Naive thymus-derived CD4-positive, alpha-beta T cell (primary cell): ENCODE measurements at regions of chr4 and their contacts with region 1.

Region 1: GRCh38 chr4:1579901-1580691 is 104.0 kb downstream of the FAM53A start:
- DNase-seq: peak; percentile 85 to 97 (median 93)
- ATAC-seq: peak; percentile 90
- H3K4me3 ChIP-seq: peak overlapping the region; percentile 70
- H3K4me3 Mint-ChIP-seq: peak overlapping the region; percentile 73 to 87 (median 80)
- H3K27ac ChIP-seq: peak overlapping the region; percentile 73
- H3K27ac Mint-ChIP-seq: peak overlapping the region; percentile 18 to 79 (median 55)
- H3K4me1 ChIP-seq: peaks cover 0 to 5% of the 10 kb centered on the region in 2 donors
- H3K4me1 Mint-ChIP-seq: peaks cover 0 to 14% (median 10%) of the 10 kb centered on the region in 7 donors
- H3K27me3 ChIP-seq: no peaks in the 10 kb centered on the region
- H3K27me3 Mint-ChIP-seq: no peaks in the 10 kb centered on the region

Region 2: GRCh38 chr4:973431-974397 is 606.4 kb before region 1 on chr4 and contains the start of gene DGKQ:
- CTCF ChIA-PET with region 1: no interaction called
- POLR2A ChIA-PET with region 1: no interaction called
- intact Hi-C with region 1: loop called in 1 of 2 experiments (anchors 2 kb)
- DNase-seq: peak; percentile 68 to 93 (median 83)
- ATAC-seq: peak; percentile 96
- H3K4me3 ChIP-seq: peak within 1 kb of the TSS; percentile 56
- H3K4me3 Mint-ChIP-seq: peak within 1 kb of the TSS; percentile 19 to 75 (median 56)
- H3K27ac ChIP-seq: peak within 1 kb of the TSS; percentile 72
- H3K27ac Mint-ChIP-seq: no peak within 1 kb of the TSS
- H3K4me1 ChIP-seq: peaks cover 13 to 26% of the 10 kb centered on the region in 2 donors
- H3K4me1 Mint-ChIP-seq: peaks cover 0 to 17% (median 10%) of the 10 kb centered on the region in 7 donors
- H3K27me3 ChIP-seq: no peaks in the 10 kb centered on the region
- H3K27me3 Mint-ChIP-seq: no peaks in the 10 kb centered on the region
- total RNA-seq, gene DGKQ: 14.9 to 28.0 (median 22.7) TPM

Region 3: DNA sequence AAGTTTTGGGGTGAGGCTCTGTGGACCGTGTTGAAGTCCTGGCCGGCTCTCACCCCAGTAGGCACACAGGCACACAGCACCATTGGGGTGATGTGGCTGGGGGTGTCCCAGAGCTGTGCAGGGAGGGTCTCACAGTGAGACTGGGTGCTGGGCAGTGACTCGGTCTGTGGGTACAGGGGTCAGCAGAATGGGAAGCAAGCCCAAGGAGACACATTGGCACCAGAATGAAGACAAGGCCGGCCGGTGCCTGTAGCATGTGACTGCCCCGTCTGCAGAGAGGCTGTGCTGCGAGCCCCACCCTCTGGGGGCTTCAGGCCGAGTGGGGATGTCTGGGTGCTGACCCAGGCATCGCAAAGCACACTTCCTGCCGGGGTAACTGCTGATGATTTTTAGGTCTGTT is 285.2 kb before region 1 on chr4:
- CTCF ChIA-PET with region 1: no interaction called
- POLR2A ChIA-PET with region 1: no interaction called
- intact Hi-C with region 1: no loop called
- DNase-seq: no peak
- ATAC-seq: no peak
- H3K4me3 ChIP-seq: no peak overlapping the region
- H3K4me3 Mint-ChIP-seq: peak overlapping the region in 1 of 10 donors; percentile 53
- H3K27ac ChIP-seq: no peak overlapping the region
- H3K27ac Mint-ChIP-seq: no peak overlapping the region
- H3K4me1 ChIP-seq: peaks cover 18 to 37% of the 10 kb centered on the region in 2 donors
- H3K4me1 Mint-ChIP-seq: peaks cover 39 to 82% (median 69%) of the 10 kb centered on the region in 7 donors
- H3K27me3 ChIP-seq: no peaks in the 10 kb centered on the region
- H3K27me3 Mint-ChIP-seq: no peaks in the 10 kb centered on the region

Region 4: DNA sequence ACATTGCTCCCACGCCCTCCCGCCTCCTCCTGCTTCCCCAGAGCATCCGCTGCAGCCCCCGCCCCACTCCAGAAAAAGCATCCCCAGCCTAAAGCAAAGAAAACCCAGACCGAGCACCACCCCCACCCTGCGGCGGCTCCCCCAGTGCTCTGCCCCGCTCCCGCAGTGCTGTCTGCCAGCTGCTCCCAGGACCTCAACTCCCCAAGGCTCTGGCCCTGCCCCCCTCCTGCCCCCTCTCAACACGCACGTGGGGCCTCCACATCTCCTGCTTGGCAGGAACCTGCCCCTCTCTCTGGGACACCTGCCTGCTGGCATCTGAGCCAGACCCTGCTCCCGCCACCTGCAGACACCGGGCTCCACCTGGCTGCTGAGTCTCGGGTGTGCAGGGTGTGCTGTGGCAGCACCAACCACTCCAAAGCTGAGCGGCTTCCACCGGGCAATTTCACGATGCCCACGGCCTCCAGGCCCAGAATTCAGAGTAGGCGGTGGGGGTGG is 24.7 kb after region 1 on chr4:
- CTCF ChIA-PET with region 1: interaction called, 6 read pairs
- POLR2A ChIA-PET with region 1: interaction called, 22 read pairs
- intact Hi-C with region 1: loop called in 1 of 2 experiments (anchors 1 kb)
- DNase-seq: peak in 7 of 9 donors; percentile 55 to 81 (median 70)
- ATAC-seq: peak; percentile 80
- H3K4me3 ChIP-seq: peak overlapping the region; percentile 46
- H3K4me3 Mint-ChIP-seq: peak overlapping the region in 9 of 10 donors; percentile 55 to 84 (median 75)
- H3K27ac ChIP-seq: peak overlapping the region; percentile 45
- H3K27ac Mint-ChIP-seq: peak overlapping the region in 8 of 9 donors; percentile 77 to 97 (median 86)
- H3K4me1 ChIP-seq: peaks cover 10 to 29% of the 10 kb centered on the region in 2 donors
- H3K4me1 Mint-ChIP-seq: peaks cover 0 to 35% (median 13%) of the 10 kb centered on the region in 7 donors
- H3K27me3 ChIP-seq: no peaks in the 10 kb centered on the region
- H3K27me3 Mint-ChIP-seq: no peaks in the 10 kb centered on the region

Region 5: GRCh38 chr4:1721004-1721665 is 141.0 kb after region 1 on chr4 and contains the starts of genes TACC3 and TMEM129:
- CTCF ChIA-PET with region 1: no interaction called
- POLR2A ChIA-PET with region 1: interaction called, 3 read pairs
- intact Hi-C with region 1: loop called in 1 of 2 experiments (anchors 2 kb)
- DNase-seq: peak; percentile 79 to 97 (median 95)
- ATAC-seq: peak; percentile 92
- H3K4me3 ChIP-seq: peak within 1 kb of the TSS; percentile 70
- H3K4me3 Mint-ChIP-seq: peak within 1 kb of the TSS; percentile 79 to 97 (median 93)
- H3K27ac ChIP-seq: peak within 1 kb of the TSS; percentile 88
- H3K27ac Mint-ChIP-seq: peak within 1 kb of the TSS; percentile 98 to 100 (median 99)
- H3K4me1 ChIP-seq: peaks cover 45 to 52% of the 10 kb centered on the region in 2 donors
- H3K4me1 Mint-ChIP-seq: peaks cover 25 to 56% (median 52%) of the 10 kb centered on the region in 7 donors
- H3K27me3 ChIP-seq: no peaks in the 10 kb centered on the region
- H3K27me3 Mint-ChIP-seq: no peaks in the 10 kb centered on the region
- total RNA-seq, gene TACC3: 100 to 165 (median 162) TPM
- total RNA-seq, gene TMEM129: 20.0 to 41.1 (median 26.7) TPM

Region 6: GRCh38 chr4:2008875-2009703 is 429.0 kb after region 1 on chr4 and contains the start of gene NELFA:
- CTCF ChIA-PET with region 1: no interaction called
- POLR2A ChIA-PET with region 1: no interaction called
- intact Hi-C with region 1: loop called in 1 of 2 experiments (anchors 2 kb)
- DNase-seq: peak; percentile 92 to 98 (median 96)
- ATAC-seq: peak; percentile 93
- H3K4me3 ChIP-seq: peak within 1 kb of the TSS; percentile 96
- H3K4me3 Mint-ChIP-seq: peak within 1 kb of the TSS; percentile 81 to 96 (median 94)
- H3K27ac ChIP-seq: peak within 1 kb of the TSS; percentile 99
- H3K27ac Mint-ChIP-seq: peak within 1 kb of the TSS; percentile 91 to 99 (median 96)
- H3K4me1 ChIP-seq: peaks cover 13 to 24% of the 10 kb centered on the region in 2 donors
- H3K4me1 Mint-ChIP-seq: peaks cover 30 to 38% (median 34%) of the 10 kb centered on the region in 7 donors
- H3K27me3 ChIP-seq: no peaks in the 10 kb centered on the region
- H3K27me3 Mint-ChIP-seq: peaks cover 0 to 20% (median 0%) of the 10 kb centered on the region in 5 donors
- total RNA-seq, gene NELFA: 32.7 to 50.1 (median 43.6) TPM